ENCODE measurements at regions of chr15 and their contacts with region 1.

Region 1: DNA sequence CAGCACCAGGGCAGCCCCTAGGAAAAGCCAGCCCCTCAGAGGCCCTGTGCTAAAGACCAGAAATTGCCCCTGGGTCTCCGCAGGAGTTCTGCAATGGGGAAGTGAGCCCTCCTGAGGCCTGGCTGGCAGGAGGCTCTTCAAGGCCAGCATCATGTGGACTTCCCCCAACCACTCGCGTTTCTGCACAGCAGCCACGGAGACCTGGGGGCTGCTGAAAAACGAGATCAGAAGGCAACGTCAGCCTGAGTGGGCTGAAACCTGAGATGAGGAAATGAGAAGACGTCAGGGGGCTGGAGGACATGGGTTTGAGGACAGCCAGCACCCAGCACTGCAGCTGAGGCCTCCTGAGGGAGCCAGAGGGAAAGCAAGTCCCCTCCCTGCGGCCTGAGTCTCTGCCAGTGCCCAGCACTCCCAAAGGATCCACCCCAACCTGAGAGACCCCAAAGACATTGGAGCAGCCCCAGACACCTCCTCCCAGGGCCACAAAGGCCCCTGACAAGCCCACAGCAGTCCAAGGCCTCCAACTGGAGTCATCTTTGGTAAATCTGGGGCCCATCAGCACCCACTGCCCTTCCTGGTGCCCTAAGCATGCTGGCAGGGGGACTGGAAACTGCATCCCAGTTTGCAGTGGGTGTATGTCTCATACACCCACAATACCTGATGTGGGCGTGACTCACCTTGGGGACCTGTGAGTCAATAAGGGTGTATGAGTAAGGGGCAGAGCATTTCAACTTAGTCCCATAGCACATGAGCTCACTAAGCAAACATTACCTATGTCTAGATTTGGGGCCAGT is 29.2 kb upstream of the CYP11A1 start:
- DNase-seq: peak; percentile 89
- ATAC-seq: peak; percentile 76
- H3K4me3 ChIP-seq: peak overlapping the region; percentile 16 to 40; a peak in 3 of 4 replicates
- H3K27ac ChIP-seq: peak overlapping the region; percentile 75
- H3K4me1 ChIP-seq: peaks cover 68 to 98% of the 10 kb centered on the region in 2 experiments
- H3K27me3 ChIP-seq: no peaks in the 10 kb centered on the region
- CTCF ChIP-seq: 0 out of 6 replicates have a peak, but pooled peaks of 1 of the 3 experiments have one; percentile 6
- POLR2A ChIP-seq: no peak
- RAD21 ChIP-seq: no peak

Region 2: DNA sequence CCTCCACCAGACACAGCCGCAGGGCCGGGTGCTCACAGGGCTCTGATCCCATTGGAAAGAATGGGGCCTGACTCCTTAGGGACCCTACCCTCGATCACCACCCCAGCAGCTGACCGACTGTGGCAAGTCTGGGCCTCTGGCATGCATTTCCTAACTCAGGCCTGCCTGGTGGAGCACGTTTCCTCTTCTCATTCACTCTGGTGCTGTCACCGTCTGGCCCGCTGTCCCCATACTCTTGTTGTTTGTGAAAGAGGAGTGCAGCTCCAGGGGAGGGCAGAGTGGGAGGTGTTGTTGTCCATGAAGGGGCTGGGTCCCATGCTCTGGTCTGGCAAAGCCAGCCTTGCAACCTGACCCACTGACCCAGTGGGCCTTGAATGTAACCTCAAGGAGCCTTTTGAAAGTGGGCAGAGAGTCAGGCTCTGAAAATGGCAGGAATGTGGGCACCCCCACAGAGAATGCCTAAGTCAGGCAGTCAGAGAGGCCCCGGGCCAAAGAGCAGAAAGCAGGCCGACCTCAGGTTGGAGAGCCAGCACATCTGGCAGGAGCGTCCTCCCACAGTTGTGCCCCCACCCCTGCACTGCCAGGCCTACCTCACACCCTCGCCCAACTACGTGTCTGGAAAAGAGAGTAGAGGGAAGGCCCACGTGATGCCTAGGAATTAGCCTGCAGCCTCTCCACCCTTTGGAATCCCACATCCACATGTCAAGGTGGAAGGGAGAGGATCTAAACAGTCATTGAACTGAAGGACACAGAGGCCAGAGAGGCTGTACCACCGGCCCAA is 26.2 kb after region 1 on chr15:
- CTCF ChIA-PET with region 1: no interaction called
- POLR2A ChIA-PET with region 1: interaction called, 6 read pairs
- RAD21 ChIA-PET with region 1: no interaction called
- intact Hi-C with region 1: loop called (anchors 1 kb)
- DNase-seq: no peak
- ATAC-seq: peak; percentile 53
- H3K4me3 ChIP-seq: peak overlapping the region in 1 of 2 experiments; percentile 27; a peak in 1 of 4 replicates
- H3K27ac ChIP-seq: peak overlapping the region; percentile 90
- H3K4me1 ChIP-seq: peaks cover 75 to 96% of the 10 kb centered on the region in 2 experiments
- H3K27me3 ChIP-seq: no peaks in the 10 kb centered on the region
- CTCF ChIP-seq: no peak
- POLR2A ChIP-seq: no peak
- RAD21 ChIP-seq: no peak

Region 3: DNA sequence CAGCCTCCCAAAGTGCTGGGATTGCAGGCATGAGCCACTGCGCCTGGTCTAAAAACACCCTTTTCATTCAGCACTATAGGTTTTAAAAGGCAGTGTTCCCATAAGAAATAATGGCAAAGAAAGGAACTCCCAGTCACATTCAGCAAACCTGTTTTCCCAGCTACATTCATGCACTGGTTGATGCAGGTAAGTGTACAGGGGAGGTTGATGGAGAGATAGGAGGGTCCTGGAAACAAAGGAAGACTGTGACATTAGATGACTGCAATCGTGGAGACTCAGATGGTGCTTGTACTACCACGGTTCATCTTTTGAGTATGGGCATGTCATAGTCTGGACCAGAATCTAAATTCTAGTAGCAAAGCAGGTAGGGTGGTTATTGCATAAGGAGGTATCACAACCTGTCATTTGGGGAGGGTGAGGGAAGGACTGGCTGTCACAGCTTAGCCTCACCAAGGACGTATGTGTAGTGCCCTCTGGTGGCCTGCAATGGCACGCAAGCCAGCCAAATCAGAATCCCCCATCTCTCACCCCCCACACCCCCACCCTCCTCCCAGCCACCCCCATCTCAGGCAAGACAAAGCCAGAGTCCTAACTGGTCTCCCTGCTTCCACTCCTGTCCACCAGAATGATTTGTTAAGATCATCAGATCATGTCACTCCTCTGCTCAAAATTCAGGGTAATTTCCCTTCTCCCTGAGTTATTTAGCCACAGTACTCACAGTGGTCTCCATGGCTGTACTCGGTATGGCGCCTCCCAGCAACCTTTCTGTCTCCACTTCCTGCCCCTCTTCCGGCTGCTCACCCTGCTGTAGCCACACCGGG is 93.1 kb after region 1 on chr15:
- CTCF ChIA-PET with region 1: no interaction called
- POLR2A ChIA-PET with region 1: no interaction called
- RAD21 ChIA-PET with region 1: no interaction called
- intact Hi-C with region 1: no loop called
- DNase-seq: peak; percentile 48
- ATAC-seq: peak; percentile 94
- H3K4me3 ChIP-seq: peak overlapping the region; percentile 19 to 38
- H3K27ac ChIP-seq: no peak overlapping the region
- H3K4me1 ChIP-seq: peaks cover 0 to 11% of the 10 kb centered on the region in 2 experiments; a peak in 2 of 4 replicates
- H3K27me3 ChIP-seq: no peaks in the 10 kb centered on the region
- CTCF ChIP-seq: peak; percentile 19 to 78 (median 77); a peak in 5 of 6 replicates
- POLR2A ChIP-seq: no peak
- RAD21 ChIP-seq: peak; percentile 66

Region 4: DNA sequence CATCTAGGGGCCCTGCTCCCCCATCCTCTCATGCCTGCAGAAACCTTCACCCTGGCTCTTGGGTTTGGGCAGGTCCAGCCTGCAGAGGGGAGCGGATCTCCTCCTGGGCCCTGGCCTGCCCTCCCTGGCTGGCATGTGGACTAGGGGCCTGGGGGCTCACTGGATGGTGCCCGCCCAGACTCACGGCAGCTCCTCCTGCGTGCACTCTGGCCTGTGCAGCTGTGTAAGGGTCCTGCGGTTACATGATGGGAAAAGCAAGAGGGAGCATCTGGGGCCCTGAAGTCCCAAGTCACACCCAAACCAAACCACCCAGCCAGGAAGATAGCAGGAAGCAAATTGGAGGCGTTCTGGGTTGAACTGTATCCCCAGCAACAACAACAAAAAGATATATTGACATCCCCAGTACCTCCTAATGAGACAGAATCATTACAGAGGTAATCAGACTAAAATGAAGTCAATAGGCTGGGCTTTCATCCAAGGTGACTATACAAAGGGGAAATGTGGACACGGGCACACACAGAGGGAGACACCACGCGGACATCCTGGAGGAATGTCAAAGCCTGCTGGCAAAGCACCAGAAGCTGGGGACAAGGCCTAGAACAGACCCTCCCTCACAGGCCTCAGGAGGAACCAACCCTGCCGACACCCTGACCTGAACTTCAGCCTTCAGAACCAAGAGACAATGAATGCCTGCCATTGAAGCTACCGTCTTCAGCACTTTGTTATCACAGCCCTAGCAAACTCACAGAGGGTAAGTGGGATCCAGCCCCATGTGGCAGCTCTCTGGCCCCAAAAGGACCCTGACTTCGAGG is 208.5 kb after region 1 on chr15:
- CTCF ChIA-PET with region 1: no interaction called
- POLR2A ChIA-PET with region 1: no interaction called
- RAD21 ChIA-PET with region 1: no interaction called
- intact Hi-C with region 1: no loop called
- DNase-seq: no peak
- ATAC-seq: no peak
- H3K4me3 ChIP-seq: no peak overlapping the region
- H3K27ac ChIP-seq: no peak overlapping the region
- H3K4me1 ChIP-seq: no peaks in the 10 kb centered on the region
- H3K27me3 ChIP-seq: peaks cover 5% of the 10 kb centered on the region; the same call in 1 of the 2 replicates
- CTCF ChIP-seq: no peak
- POLR2A ChIP-seq: no peak
- RAD21 ChIP-seq: no peak